Caco-2 (cell line): ENCODE measurements at regions of chr7 and their contacts with region 1.

Region 1: GRCh38 chr7:92590711-92591310 is 621 bp upstream of the FAM133B start:
- DNase-seq: no peak
- H3K4me3 ChIP-seq: peak overlapping the region; percentile 83
- H3K4me3 Mint-ChIP-seq: peak overlapping the region; percentile 99
- H3K27ac Mint-ChIP-seq: no peak overlapping the region
- H3K4me1 ChIP-seq: peaks cover 15% of the 10 kb centered on the region; the same call in 1 of the 2 replicates
- H3K4me1 Mint-ChIP-seq: peaks cover 19% of the 10 kb centered on the region
- H3K27me3 ChIP-seq: no peaks in the 10 kb centered on the region
- H3K27me3 Mint-ChIP-seq: no peaks in the 10 kb centered on the region
- CTCF ChIP-seq: no peak

Region 2: GRCh38 chr7:92602352-92603088 is 11.7 kb after region 1 on chr7:
- CTCF ChIA-PET with region 1: interaction called, 3 read pairs
- POLR2A ChIA-PET with region 1: no interaction called
- intact Hi-C with region 1: loop called (anchors 1 kb)
- DNase-seq: no peak
- H3K4me3 ChIP-seq: no peak overlapping the region
- H3K4me3 Mint-ChIP-seq: no peak overlapping the region
- H3K27ac Mint-ChIP-seq: no peak overlapping the region
- H3K4me1 ChIP-seq: no peaks in the 10 kb centered on the region
- H3K4me1 Mint-ChIP-seq: peaks cover 6% of the 10 kb centered on the region
- H3K27me3 ChIP-seq: no peaks in the 10 kb centered on the region
- H3K27me3 Mint-ChIP-seq: no peaks in the 10 kb centered on the region
- CTCF ChIP-seq: no peak